IMR-90 (cell line): ENCODE measurements at regions of chr5 and their contacts with region 1.

Region 1: DNA sequence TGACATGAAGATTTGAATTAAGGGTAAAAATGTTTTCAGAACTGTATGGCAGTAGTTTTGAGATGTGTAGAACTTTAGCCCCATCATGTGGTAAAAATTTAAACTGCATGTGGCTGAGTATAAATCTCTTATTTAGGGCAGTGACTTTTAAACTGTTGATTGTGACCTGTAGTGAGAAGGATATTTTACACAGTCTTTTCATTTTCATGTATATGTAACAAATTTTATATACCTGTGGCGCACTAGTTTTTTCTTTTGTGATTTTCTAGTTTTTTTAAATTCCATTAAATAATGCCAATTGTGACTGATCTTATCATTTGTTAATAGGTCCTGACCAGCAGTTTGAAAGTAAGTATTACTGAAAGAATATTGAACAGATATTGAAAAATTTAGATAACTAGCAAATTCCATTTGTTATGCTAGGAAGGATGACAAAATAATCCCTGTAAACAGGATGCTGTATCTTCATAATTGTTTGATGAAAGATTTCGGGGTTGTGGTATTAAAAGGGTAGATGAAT is 47.2 kb downstream of the GPBP1 start:
- DNase-seq: peak; percentile 65
- ATAC-seq: peak; percentile 86
- H3K4me3 ChIP-seq: no peak overlapping the region
- H3K27ac ChIP-seq: no peak overlapping the region
- H3K4me1 ChIP-seq: peaks cover 8% of the 10 kb centered on the region
- H3K27me3 ChIP-seq: no peaks in the 10 kb centered on the region
- CTCF ChIP-seq: peak; percentile 93
- POLR2A ChIP-seq: no peak
- RAD21 ChIP-seq: peak; percentile 91

Region 2: GRCh38 chr5:56757071-56757470 is 464.0 kb before region 1 on chr5:
- CTCF ChIA-PET with region 1: no interaction called
- POLR2A ChIA-PET with region 1: no interaction called
- dilution Hi-C with region 1: no loop called
- in situ Hi-C with region 1: no loop called
- intact Hi-C with region 1: no loop called
- DNase-seq: peak; percentile 32
- ATAC-seq: peak; percentile 60
- H3K4me3 ChIP-seq: no peak overlapping the region
- H3K27ac ChIP-seq: no peak overlapping the region
- H3K4me1 ChIP-seq: peaks cover 3% of the 10 kb centered on the region
- H3K27me3 ChIP-seq: no peaks in the 10 kb centered on the region
- CTCF ChIP-seq: no peak
- POLR2A ChIP-seq: no peak
- RAD21 ChIP-seq: no peak

Region 3: DNA sequence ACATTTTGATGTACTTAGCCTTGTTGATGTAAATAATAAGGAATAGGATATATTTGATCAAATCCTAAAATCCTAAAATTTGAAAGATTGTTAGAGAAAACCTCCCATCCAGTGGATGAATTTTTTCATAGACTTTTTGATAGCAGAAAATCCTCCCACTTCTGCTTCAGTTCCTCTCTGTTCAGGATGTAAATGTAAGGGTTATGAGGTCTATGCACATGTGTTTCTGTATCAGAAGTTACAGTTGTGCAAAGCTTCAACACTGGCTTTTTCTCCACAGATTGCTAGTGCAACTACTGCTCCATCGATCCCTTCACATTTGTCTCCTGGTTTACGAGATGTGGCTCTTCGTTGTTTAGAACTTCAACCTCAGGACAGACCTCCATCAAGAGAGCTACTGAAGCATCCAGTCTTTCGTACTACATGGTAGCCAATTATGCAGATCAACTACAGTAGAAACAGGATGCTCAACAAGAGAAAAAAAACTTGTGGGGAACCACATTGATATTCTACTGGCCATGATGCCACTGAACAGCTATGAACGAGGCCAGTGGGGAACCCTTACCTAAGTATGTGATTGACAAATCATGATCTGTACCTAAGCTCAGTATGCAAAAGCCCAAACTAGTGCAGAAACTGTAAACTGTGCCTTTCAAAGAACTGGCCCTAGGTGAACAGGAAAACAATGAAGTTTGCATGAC is 327.7 kb before region 1 on chr5:
- CTCF ChIA-PET with region 1: no interaction called
- POLR2A ChIA-PET with region 1: no interaction called
- dilution Hi-C with region 1: no loop called
- in situ Hi-C with region 1: loop called (anchors 10 kb)
- intact Hi-C with region 1: no loop called
- DNase-seq: no peak
- ATAC-seq: no peak
- H3K4me3 ChIP-seq: no peak overlapping the region
- H3K27ac ChIP-seq: no peak overlapping the region
- H3K4me1 ChIP-seq: no peaks in the 10 kb centered on the region
- H3K27me3 ChIP-seq: no peaks in the 10 kb centered on the region
- CTCF ChIP-seq: no peak
- POLR2A ChIP-seq: no peak
- RAD21 ChIP-seq: no peak

Region 4: DNA sequence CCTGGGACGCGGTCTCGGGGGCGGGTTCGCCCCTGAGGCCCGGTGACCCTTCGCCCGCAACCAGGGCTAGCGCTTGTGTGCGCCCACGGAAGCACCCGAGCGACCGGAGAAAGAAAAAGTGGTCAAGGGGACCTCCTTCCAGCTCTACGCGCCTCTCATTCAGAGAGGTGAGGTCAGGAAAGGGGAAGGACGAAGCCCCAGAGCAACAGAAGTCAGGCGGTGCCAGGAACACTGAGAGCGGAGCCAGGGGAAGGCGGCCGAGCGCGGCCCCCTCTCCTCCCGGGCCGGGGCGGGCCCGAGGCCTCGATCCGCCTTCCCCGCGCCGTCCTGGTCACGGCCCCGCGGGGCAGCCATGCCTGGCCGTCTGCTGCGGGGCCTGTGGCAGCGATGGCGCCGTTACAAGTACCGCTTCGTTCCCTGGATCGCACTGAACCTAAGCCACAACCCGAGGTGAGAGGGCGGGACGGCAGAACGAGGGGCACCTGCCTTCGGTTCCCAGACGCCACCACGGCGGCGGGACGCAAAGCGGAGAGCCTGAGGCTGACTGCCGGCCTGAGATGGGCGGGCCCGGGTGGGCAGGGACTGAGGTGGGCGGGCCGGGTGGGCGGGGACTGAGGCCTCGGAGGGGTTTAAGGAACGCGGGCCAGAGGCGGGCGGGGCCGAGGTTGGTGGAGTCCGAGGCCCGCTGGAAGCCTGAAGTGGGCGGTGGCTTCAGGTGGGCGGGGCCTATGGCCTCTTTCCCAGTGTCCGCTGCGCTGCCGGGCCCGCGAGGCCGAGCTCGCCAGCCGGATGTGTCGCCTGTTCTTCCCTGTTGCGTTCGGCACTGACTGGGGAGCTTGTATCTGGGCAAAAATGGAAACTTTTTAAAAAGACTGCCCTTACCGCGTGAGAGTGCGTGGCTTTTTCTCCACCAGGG is 311.6 kb before region 1 on chr5 and contains the start of gene SETD9:
- CTCF ChIA-PET with region 1: interaction called, 3 read pairs
- POLR2A ChIA-PET with region 1: no interaction called
- dilution Hi-C with region 1: no loop called
- in situ Hi-C with region 1: no loop called
- intact Hi-C with region 1: loop called (anchors 2 kb)
- DNase-seq: peak; percentile 96
- ATAC-seq: peak; percentile 94
- H3K4me3 ChIP-seq: peak within 1 kb of the TSS; percentile 91
- H3K27ac ChIP-seq: peak within 1 kb of the TSS; percentile 79
- H3K4me1 ChIP-seq: no peaks in the 10 kb centered on the region
- H3K27me3 ChIP-seq: no peaks in the 10 kb centered on the region
- CTCF ChIP-seq: no peak
- POLR2A ChIP-seq: peak; percentile 95
- RAD21 ChIP-seq: no peak
- total RNA-seq, gene SETD9: 8.1 and 8.9 TPM in 2 replicates

Region 5: GRCh38 chr5:56951946-56952691 is 269.0 kb before region 1 on chr5 and contains the start of gene MIER3:
- CTCF ChIA-PET with region 1: no interaction called
- POLR2A ChIA-PET with region 1: no interaction called
- dilution Hi-C with region 1: no loop called
- in situ Hi-C with region 1: loop called (anchors 10 kb)
- intact Hi-C with region 1: loop called (anchors 1 kb)
- DNase-seq: peak; percentile 67
- ATAC-seq: peak; percentile 97
- H3K4me3 ChIP-seq: peak within 1 kb of the TSS; percentile 57
- H3K27ac ChIP-seq: peak within 1 kb of the TSS; percentile 70
- H3K4me1 ChIP-seq: peaks cover 2% of the 10 kb centered on the region; the same call in 1 of the 2 replicates
- H3K27me3 ChIP-seq: peaks cover 8% of the 10 kb centered on the region; the same call in 1 of the 2 replicates
- CTCF ChIP-seq: no peak
- POLR2A ChIP-seq: peak; percentile 76
- RAD21 ChIP-seq: no peak
- total RNA-seq, gene MIER3: 22.9 and 26.7 TPM in 2 replicates

Region 6: DNA sequence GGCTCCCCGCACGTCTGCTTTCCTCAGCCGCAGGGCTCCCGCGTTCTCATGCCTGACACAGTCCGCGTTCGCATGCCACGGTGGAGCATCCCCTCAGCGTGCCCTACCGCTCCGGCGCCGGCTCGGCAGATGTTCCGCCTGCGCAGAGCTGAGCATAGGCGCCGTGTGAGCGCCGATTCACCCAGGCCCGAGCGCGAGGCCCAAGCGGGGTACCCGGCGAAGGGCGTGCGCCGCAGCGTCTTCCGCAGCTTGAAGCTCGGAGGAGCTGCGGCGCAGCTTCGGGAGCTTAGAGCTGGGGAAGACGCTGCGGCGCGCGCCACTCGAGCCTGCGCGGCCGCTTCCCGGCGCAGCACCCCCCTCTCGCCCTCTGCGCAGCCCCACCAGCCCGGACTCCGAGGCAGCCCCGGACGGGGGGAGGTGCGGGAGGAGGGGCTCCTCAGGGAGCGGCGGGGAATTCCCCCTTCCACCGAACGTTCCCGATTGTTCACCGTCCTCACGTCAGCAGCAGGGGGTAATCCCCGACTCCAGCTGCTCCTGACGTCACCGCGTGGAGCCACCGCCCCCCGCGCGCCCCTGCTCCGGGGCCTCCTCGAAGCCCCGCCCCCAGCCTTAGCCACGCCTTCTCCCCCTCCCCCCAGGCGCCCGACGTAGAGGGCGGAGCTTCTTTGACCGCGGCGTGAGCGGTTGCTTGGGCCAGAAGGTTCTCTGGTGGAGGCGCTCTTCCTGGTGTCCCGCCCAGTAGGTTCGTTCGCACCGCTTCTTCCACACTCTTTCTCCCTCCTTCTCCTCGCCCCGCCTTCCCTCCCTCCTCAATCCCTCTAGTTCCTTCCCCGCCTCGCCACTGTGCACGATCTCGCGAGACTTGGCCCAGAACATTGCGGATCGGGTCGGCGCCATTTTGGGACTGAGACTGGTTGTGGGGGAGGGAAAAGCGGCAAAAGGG is 47.7 kb before region 1 on chr5 and contains the start of gene GPBP1:
- CTCF ChIA-PET with region 1: no interaction called
- POLR2A ChIA-PET with region 1: no interaction called
- dilution Hi-C with region 1: no loop called
- in situ Hi-C with region 1: no loop called
- intact Hi-C with region 1: loop called (anchors 1 kb)
- DNase-seq: peak; percentile 99
- ATAC-seq: peak; percentile 91
- H3K4me3 ChIP-seq: peak within 1 kb of the TSS; percentile 93
- H3K27ac ChIP-seq: peak within 1 kb of the TSS; percentile 97
- H3K4me1 ChIP-seq: no peaks in the 10 kb centered on the region; the same call in 1 of the 2 replicates
- H3K27me3 ChIP-seq: no peaks in the 10 kb centered on the region
- CTCF ChIP-seq: no peak
- POLR2A ChIP-seq: peak; percentile 75
- RAD21 ChIP-seq: no peak
- total RNA-seq, gene GPBP1: 29.2 and 63.9 TPM in 2 replicates